ENCODE measurements at regions of chr1 and their contacts with region 1.

Region 1: DNA sequence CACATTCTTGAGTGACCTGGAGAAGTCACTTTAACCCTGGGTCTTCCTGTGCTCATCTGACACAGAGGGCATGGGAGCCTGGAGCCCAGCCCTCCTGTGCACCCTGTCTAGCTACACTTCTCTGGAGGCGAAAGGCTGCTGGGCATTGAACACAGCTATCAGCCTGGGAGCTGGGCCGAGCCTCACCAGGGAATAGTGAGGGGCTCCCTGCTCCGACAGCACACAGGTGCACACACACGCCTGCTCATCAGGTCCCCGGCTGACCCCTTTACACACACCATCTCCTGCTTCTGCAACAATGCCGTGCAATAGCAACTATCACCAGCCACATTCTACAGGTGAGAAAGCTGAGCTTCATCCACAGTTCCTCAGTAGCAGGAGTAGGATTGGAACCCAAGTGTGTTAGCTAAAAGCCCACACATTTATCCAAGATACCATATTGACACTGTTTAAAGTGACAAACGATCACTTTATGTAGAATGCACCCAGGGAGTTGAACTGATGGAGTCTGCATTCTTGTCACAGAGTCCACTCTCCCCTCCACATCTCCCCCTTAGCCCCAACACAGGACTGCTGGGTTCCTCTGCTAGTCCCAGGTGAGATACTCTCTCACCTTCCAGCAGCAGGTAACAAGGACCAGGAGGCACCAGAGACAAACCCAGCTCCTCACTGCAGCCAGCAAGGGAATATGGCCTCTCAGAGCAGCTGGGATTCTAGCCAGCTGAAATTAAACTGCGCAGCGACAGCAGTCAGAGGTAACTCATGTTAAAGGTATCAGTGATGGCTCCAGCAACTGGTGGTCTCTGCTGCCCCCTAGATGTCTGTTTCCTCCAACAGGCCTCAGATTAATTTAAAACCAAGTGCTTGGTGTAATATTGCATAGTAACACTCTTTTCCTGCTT is 18.3 kb upstream of the CAPN8 start:
- DNase-seq: peak; percentile 81
- ATAC-seq: peak; percentile 77
- H3K4me3 Mint-ChIP-seq: no peak overlapping the region
- H3K27ac Mint-ChIP-seq: no peak overlapping the region
- H3K4me1 Mint-ChIP-seq: no peaks in the 10 kb centered on the region
- H3K27me3 Mint-ChIP-seq: peaks cover 3% of the 10 kb centered on the region
- CTCF ChIP-seq: peak; percentile 68

Region 2: GRCh38 chr1:223515926-223516325 is 167.9 kb before region 1 on chr1:
- CTCF ChIA-PET with region 1: interaction called, 12 read pairs
- POLR2A ChIA-PET with region 1: no interaction called
- intact Hi-C with region 1: no loop called
- DNase-seq: no peak
- ATAC-seq: peak; percentile 17
- H3K4me3 Mint-ChIP-seq: no peak overlapping the region
- H3K27ac Mint-ChIP-seq: peak overlapping the region; percentile 32
- H3K4me1 Mint-ChIP-seq: peaks cover 8% of the 10 kb centered on the region
- H3K27me3 Mint-ChIP-seq: no peaks in the 10 kb centered on the region
- CTCF ChIP-seq: no peak

Region 3: GRCh38 chr1:223531742-223532341 is 152.0 kb before region 1 on chr1:
- CTCF ChIA-PET with region 1: interaction called, 7 read pairs
- POLR2A ChIA-PET with region 1: no interaction called
- intact Hi-C with region 1: loop called (anchors 5 kb)
- DNase-seq: peak; percentile 79
- ATAC-seq: peak; percentile 51
- H3K4me3 Mint-ChIP-seq: no peak overlapping the region
- H3K27ac Mint-ChIP-seq: no peak overlapping the region
- H3K4me1 Mint-ChIP-seq: no peaks in the 10 kb centered on the region
- H3K27me3 Mint-ChIP-seq: peaks cover 3% of the 10 kb centered on the region
- CTCF ChIP-seq: peak; percentile 4

Region 4: DNA sequence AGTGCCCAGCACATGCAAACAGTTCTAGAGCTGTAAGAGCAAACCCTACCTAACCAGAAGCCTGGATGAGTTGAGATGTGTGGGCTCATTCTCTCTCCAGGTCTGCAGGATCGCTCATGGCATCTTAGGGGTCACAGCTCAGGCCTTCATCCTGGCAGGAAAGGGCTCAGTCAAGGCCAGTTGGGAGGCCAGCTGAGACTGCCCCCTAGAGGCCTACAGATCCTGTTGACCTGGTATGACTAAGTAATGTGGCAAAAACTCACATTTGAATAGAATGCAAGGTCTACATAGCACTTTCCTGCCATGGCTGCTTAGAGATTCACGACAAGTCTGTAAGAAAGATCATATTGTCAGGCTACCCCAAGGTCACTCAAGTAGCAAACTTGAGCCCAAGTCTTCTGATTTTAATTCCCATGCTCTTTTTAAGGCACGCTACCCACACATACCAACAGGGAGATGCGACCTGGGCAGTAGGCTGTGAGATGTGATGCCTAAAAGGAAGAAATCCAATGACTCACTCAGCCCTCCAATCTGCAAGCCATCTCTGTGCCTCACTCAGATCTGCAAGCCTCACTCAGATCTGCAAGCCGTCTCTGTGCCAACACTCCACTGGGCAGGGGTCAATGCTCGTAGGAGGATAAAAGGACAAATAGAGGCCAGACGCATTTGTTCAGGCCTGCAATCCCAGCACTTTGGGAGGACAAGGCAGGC is 13.2 kb before region 1 on chr1:
- CTCF ChIA-PET with region 1: interaction called, 15 read pairs
- POLR2A ChIA-PET with region 1: no interaction called
- intact Hi-C with region 1: no loop called
- DNase-seq: peak; percentile 48
- ATAC-seq: peak; percentile 47
- H3K4me3 Mint-ChIP-seq: no peak overlapping the region
- H3K27ac Mint-ChIP-seq: no peak overlapping the region
- H3K4me1 Mint-ChIP-seq: no peaks in the 10 kb centered on the region
- H3K27me3 Mint-ChIP-seq: no peaks in the 10 kb centered on the region
- CTCF ChIP-seq: peak; percentile 39

Region 5: GRCh38 chr1:223695941-223696340 is 12.1 kb after region 1 on chr1:
- CTCF ChIA-PET with region 1: interaction called, 10 read pairs
- POLR2A ChIA-PET with region 1: no interaction called
- intact Hi-C with region 1: no loop called
- DNase-seq: no peak
- ATAC-seq: no peak
- H3K4me3 Mint-ChIP-seq: no peak overlapping the region
- H3K27ac Mint-ChIP-seq: no peak overlapping the region
- H3K4me1 Mint-ChIP-seq: peaks cover 15% of the 10 kb centered on the region
- H3K27me3 Mint-ChIP-seq: no peaks in the 10 kb centered on the region
- CTCF ChIP-seq: no peak

Measured in activated CD8-positive, alpha-beta T cell treated with anti-CD3 and anti-CD28 coated beads for 36 hours (primary cell).